Panc1 (cell line): ENCODE measurements at regions of chr3 and their contacts with region 1.

Region 1: GRCh38 chr3:150414959-150415358 is 6.9 kb downstream of the TSC22D2 start:
- DNase-seq: no peak
- ATAC-seq: no peak
- H3K4me3 ChIP-seq: peak overlapping the region; percentile 87 to 93; a peak in 3 of 4 replicates
- H3K27ac ChIP-seq: peak overlapping the region; percentile 100
- H3K4me1 ChIP-seq: peaks cover 58% of the 10 kb centered on the region
- H3K27me3 ChIP-seq: no peaks in the 10 kb centered on the region
- CTCF ChIP-seq: no peak

Region 2: GRCh38 chr3:150227839-150228238 is 187.1 kb before region 1 on chr3:
- CTCF ChIA-PET with region 1: interaction called, 3 read pairs
- POLR2A ChIA-PET with region 1: no interaction called
- in situ Hi-C with region 1: no loop called
- intact Hi-C with region 1: loop called (anchors 5 kb)
- DNase-seq: no peak
- ATAC-seq: peak; percentile 84
- H3K4me3 ChIP-seq: no peak overlapping the region
- H3K27ac ChIP-seq: peak overlapping the region; percentile 18; the same call in 1 of the 2 replicates
- H3K4me1 ChIP-seq: 0 out of 2 replicates have a peak, but pooled peaks cover 4% of the 10 kb centered on the region
- H3K27me3 ChIP-seq: no peaks in the 10 kb centered on the region
- CTCF ChIP-seq: peak; percentile 95